ENCODE measurements at regions of chr6 and their contacts with region 1.

Region 1: DNA sequence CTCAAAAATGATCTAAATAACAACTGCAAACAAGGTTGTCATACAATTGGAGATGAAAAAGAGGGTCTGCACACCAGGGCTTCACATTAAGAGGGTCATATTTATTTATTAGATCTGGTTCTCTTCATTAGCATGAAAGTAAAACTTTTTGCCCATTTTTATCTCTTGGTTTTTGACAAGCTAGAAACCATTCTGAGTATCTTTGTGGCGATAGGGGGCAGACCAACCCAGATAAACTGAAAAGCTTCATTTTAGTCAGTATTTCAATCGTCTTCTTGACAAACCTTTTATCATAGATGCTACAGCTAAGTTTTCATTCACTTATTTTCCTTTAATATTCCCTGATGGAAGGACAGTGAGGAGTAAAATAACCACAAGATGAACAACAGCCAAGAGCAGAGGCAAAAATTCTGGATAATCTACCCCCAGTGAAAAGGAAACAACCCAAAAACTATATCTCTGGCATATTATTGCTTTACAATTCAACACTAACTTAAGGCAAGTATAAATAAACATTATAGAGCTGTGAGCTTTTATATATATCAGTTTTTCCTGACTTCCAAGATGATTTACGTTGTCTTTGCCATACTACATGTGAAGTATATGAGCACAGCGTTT is 45.2 kb downstream of the THEMIS start:
- DNase-seq: no peak
- H3K4me3 ChIP-seq: no peak overlapping the region
- H3K27ac ChIP-seq: no peak overlapping the region
- H3K4me1 ChIP-seq: no peaks in the 10 kb centered on the region
- H3K27me3 ChIP-seq: no peaks in the 10 kb centered on the region
- CTCF ChIP-seq: peak; percentile 14 to 41 (median 26)
- POLR2A ChIP-seq: no peak

Region 2: DNA sequence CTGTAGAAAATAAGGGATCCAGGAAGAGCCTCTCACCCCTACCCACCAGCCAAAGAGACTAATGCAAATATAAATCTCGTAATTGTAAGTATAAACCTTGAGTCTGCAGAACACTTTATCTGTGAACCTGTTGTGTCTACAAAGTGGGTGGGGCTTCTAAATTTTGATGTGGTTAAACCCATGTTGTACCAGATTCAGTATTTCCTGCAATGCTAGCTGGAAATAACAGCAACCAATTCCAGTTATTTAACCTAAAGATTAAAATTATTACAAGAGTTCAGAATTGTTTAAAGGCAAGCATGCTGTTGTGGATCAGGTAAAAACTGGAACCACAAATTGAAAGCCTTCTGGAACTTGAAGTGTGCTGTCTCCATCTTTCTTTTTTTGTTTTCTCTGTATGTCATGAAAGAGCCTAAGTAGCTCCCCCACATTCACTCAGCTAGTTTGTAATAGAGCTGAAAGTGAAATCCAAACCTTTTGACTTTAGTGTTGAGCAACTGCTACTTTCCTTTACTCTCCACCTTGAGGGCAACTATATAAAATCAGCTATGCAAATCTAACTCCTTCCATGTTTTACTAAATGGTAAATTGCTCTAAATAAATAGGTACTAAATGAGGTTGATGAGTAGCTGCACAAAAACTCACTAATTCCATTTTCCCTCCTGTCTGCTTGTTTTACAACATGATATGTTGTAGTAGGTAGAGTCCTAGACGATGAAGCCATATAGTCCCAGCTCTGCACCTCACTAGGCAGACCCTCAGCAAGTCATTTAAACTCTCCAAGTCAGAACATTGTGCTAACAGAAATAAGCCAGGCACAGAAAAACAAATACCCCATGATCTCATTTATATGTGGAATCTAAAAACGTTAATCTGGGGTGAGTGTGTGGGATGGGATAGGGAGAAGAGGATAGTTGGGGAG is 63.1 kb after region 1 on chr6:
- intact Hi-C with region 1: no loop called
- DNase-seq: no peak
- H3K4me3 ChIP-seq: no peak overlapping the region
- H3K27ac ChIP-seq: no peak overlapping the region
- H3K4me1 ChIP-seq: no peaks in the 10 kb centered on the region
- H3K27me3 ChIP-seq: no peaks in the 10 kb centered on the region
- CTCF ChIP-seq: no peak
- POLR2A ChIP-seq: no peak

Region 3: DNA sequence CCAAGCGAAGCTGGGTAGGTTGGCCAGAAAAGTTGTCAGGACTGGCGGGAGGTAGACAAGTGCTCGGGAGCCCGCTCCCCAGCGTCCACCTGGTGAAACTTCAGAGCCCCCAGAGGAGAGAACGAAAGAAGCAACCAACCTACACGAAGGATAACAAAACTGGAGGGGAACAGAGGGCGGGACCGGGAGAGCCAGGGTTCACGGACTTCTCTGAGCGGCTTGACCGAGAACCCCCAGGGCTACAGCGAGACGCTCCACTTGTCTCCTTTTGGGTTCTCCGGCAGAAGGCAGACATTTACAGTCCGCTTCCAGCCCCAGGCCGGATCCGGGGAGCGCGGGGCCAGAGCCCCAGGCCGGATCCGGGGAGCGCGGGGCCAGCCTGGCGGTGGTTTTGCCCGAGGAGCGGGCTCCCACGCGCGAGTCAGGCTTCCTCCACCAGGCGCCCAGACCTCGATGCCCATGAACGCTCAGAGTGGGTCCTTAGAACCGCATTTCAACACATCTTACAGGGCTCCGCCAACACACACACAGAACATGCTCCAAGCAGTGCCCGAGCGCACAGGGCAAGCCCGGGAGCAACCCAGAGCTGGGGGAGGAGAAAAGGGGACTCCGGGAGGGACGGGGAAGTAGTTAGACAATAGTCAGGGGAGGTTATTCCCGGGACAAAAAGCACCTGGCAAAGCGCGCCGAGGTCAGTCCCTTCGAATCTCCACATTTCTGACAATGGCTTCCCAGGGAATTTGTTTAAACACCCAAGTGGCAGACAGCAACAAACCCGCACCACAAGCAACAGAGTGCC is 663.7 kb after region 1 on chr6:
- intact Hi-C with region 1: loop called (anchors 10 kb)
- DNase-seq: peak; percentile 68
- H3K4me3 ChIP-seq: peak overlapping the region; percentile 61 to 64
- H3K27ac ChIP-seq: peak overlapping the region; percentile 96 to 98
- H3K4me1 ChIP-seq: peaks cover 5% of the 10 kb centered on the region
- H3K27me3 ChIP-seq: no peaks in the 10 kb centered on the region
- CTCF ChIP-seq: peak in 3 of 4 experiments; percentile 19 to 40 (median 27)
- POLR2A ChIP-seq: no peak

Measured in prostate gland (tissue), 2 donors.